ENCODE measurements at regions of chr22 and their contacts with region 1.

Region 1: DNA sequence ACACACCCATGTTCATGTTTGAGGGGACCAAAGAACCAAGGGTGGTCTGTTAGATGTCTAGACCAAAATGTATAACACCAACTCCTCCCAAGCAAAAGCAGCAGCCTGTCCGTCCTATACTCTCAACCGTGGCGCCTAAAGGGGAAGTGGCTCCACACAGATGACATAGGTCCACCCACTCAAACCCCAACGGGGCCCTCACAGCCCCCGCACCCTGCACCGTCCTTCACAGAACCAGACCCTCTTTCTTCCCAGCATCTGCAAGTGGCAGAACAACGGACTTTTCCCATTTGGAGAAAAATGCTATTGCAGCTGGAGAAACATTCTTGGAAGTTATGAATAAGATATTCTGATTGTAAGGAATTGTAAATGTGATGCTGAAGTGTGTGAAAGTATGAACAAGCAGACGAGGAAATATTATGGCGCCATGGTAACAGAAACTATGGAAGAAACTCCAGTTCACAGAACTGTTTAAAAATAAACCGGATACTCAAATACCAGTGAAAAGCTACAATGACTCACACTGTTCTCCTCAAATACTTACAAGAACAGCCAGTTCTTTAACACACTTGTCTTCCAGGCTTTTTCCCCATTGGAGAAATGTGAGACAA is 76.5 kb upstream of the ARFGAP3 start:
- DNase-seq: peak; percentile 68 to 80
- ATAC-seq: peak; percentile 80
- H3K4me3 ChIP-seq: no peak overlapping the region
- H3K27ac ChIP-seq: peak overlapping the region; percentile 95 to 96
- H3K4me1 ChIP-seq: peaks cover 15 to 25% of the 10 kb centered on the region in 2 donors
- H3K27me3 ChIP-seq: no peaks in the 10 kb centered on the region

Region 2: DNA sequence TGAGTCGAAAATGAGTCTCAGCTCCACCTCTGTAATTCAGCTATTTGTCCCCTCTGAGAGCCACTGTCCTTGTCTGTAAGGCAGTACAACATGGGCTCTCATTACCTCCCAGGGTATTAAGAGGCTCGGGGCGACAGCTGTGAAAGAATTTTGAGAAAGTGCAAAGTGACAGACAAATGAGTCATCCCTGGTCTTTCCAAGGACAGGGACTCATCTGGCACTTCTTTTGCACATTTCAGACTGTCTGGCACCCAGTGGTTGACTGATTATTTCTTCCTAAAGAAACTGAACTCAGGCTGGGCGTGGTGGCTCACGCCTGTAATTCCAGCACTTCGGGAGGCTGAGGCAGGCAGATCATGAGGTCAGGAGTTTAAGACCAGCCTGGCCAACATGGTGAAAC is 14.4 kb before region 1 on chr22:
- intact Hi-C with region 1: no loop called
- DNase-seq: peak in 1 of 2 donors; percentile 40
- ATAC-seq: no peak
- H3K4me3 ChIP-seq: no peak overlapping the region
- H3K27ac ChIP-seq: peak overlapping the region in 1 of 2 donors; percentile 13
- H3K4me1 ChIP-seq: peaks cover 4 to 5% of the 10 kb centered on the region in 2 donors
- H3K27me3 ChIP-seq: no peaks in the 10 kb centered on the region

Region 3: GRCh38 chr22:42984389-42984788 is 50.8 kb after region 1 on chr22:
- intact Hi-C with region 1: no loop called
- DNase-seq: no peak
- ATAC-seq: no peak
- H3K4me3 ChIP-seq: no peak overlapping the region
- H3K27ac ChIP-seq: no peak overlapping the region
- H3K4me1 ChIP-seq: peaks cover 0 to 2% of the 10 kb centered on the region in 2 donors
- H3K27me3 ChIP-seq: no peaks in the 10 kb centered on the region

Region 4: GRCh38 chr22:42994881-42995562 is 61.4 kb after region 1 on chr22:
- intact Hi-C with region 1: loop called (anchors 5 kb)
- DNase-seq: peak; percentile 71 to 79
- ATAC-seq: peak; percentile 82
- H3K4me3 ChIP-seq: peak overlapping the region; percentile 41 to 42
- H3K27ac ChIP-seq: peak overlapping the region; percentile 79 to 89
- H3K4me1 ChIP-seq: peaks cover 7 to 14% of the 10 kb centered on the region in 2 donors
- H3K27me3 ChIP-seq: no peaks in the 10 kb centered on the region